Ovary (tissue), 10 donors: ENCODE measurements at regions of chr14 and their contacts with region 1.

Region 1: DNA sequence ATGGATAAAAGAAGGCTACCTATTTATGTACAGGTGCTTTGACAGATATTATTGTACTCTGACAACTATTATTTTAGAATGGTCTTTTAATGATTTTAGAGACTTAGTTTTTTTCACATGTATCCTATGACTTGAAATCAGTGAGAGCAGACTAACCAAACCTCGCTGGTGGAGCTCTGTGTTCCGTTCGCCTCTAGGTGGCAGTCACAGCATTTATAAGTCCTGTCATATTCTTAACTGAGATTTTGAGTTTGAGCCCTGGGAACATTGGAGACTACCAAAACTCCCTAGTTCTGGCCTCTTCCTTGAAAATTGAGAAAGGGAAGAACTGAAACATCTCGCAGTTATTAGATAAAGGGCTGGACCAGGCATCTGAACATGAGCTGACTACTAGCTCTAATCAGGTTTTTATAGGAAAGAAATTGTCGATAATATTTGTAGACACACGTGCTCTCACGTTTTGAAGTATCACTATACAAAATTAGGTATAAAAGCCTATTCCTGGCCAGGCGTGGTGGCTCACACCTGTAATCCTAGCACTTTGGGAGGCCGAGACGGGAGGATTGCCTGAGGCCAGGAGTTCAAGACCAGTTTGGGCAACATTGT is 48.3 kb downstream of the TTLL5 start:
- DNase-seq: peak; percentile 74 to 84 (median 78)
- H3K4me3 ChIP-seq: no peak overlapping the region
- H3K27ac ChIP-seq: no peak overlapping the region
- H3K4me1 ChIP-seq: no peaks in the 10 kb centered on the region
- H3K27me3 ChIP-seq: no peaks in the 10 kb centered on the region
- CTCF ChIP-seq: peak; percentile 52 to 67 (median 65)
- EP300 ChIP-seq: no peak
- POLR2A ChIP-seq: no peak

Region 2: DNA sequence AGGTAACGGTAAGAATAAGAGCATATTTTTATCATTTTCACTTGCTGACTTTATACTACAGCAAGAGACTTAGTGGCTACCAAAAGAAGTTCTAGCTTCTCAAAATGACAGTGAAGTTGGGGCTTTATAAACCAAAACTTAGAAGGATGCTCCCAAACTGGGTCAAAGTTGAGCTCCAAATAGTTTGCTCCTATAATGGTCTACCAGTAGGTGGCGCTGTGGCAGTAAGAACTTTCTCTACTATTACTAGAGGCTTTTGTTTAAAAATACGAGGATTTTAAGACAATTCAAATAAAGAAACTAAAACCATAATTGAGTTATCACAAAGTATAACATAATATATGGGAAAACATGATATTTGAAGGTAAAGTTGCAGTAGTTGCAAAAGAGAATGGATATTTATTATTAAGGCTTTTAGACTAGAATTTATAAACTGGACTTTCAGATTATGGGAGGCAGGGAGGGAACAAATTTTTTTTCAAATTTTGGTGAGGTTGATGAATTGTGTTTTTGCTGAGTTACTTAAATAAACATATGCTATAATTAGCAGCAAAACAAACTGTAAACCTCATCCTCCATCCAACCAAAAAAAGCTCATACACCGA is 197.5 kb after region 1 on chr14:
- intact Hi-C with region 1: loop called in 1 of 4 experiments (anchors 10 kb)
- DNase-seq: peak; percentile 45 to 78 (median 50)
- H3K4me3 ChIP-seq: no peak overlapping the region
- H3K27ac ChIP-seq: no peak overlapping the region
- H3K4me1 ChIP-seq: peaks cover 4% of the 10 kb centered on the region
- H3K27me3 ChIP-seq: no peaks in the 10 kb centered on the region
- CTCF ChIP-seq: peak; percentile 68 to 72 (median 70)
- EP300 ChIP-seq: no peak
- POLR2A ChIP-seq: no peak